ENCODE measurements at regions of chr9 and their contacts with region 1.

Region 1: GRCh38 chr9:97728256-97728655 is 31.1 kb upstream of the XPA start:
- DNase-seq: no peak
- ATAC-seq: no peak
- H3K4me3 Mint-ChIP-seq: no peak overlapping the region
- H3K27ac Mint-ChIP-seq: no peak overlapping the region
- H3K4me1 Mint-ChIP-seq: no peaks in the 10 kb centered on the region
- H3K27me3 Mint-ChIP-seq: peaks cover 5% of the 10 kb centered on the region

Region 2: GRCh38 chr9:97559111-97559514 is 169.1 kb before region 1 on chr9:
- CTCF ChIA-PET with region 1: no interaction called
- POLR2A ChIA-PET with region 1: no interaction called
- intact Hi-C with region 1: no loop called
- DNase-seq: peak; percentile 48
- ATAC-seq: peak; percentile 89
- H3K4me3 Mint-ChIP-seq: no peak overlapping the region
- H3K27ac Mint-ChIP-seq: peak overlapping the region; percentile 38
- H3K4me1 Mint-ChIP-seq: peaks cover 10% of the 10 kb centered on the region
- H3K27me3 Mint-ChIP-seq: peaks cover 19% of the 10 kb centered on the region

Region 3: GRCh38 chr9:97740848-97741821 is 12.9 kb after region 1 on chr9:
- CTCF ChIA-PET with region 1: interaction called, 7 read pairs
- POLR2A ChIA-PET with region 1: interaction called, 13 read pairs
- intact Hi-C with region 1: no loop called
- DNase-seq: peak; percentile 67
- ATAC-seq: peak; percentile 82
- H3K4me3 Mint-ChIP-seq: peak overlapping the region; percentile 26
- H3K27ac Mint-ChIP-seq: no peak overlapping the region
- H3K4me1 Mint-ChIP-seq: peaks cover 6% of the 10 kb centered on the region
- H3K27me3 Mint-ChIP-seq: peaks cover 59% of the 10 kb centered on the region

Region 4: GRCh38 chr9:97752274-97752673 is 24.0 kb after region 1 on chr9:
- CTCF ChIA-PET with region 1: no interaction called
- POLR2A ChIA-PET with region 1: no interaction called
- intact Hi-C with region 1: no loop called
- DNase-seq: no peak
- ATAC-seq: no peak
- H3K4me3 Mint-ChIP-seq: no peak overlapping the region
- H3K27ac Mint-ChIP-seq: no peak overlapping the region
- H3K4me1 Mint-ChIP-seq: no peaks in the 10 kb centered on the region
- H3K27me3 Mint-ChIP-seq: peaks cover 5% of the 10 kb centered on the region